Sigmoid colon (tissue), 7 donors: ENCODE measurements at regions of chr19 and their contacts with region 1.

Region 1: DNA sequence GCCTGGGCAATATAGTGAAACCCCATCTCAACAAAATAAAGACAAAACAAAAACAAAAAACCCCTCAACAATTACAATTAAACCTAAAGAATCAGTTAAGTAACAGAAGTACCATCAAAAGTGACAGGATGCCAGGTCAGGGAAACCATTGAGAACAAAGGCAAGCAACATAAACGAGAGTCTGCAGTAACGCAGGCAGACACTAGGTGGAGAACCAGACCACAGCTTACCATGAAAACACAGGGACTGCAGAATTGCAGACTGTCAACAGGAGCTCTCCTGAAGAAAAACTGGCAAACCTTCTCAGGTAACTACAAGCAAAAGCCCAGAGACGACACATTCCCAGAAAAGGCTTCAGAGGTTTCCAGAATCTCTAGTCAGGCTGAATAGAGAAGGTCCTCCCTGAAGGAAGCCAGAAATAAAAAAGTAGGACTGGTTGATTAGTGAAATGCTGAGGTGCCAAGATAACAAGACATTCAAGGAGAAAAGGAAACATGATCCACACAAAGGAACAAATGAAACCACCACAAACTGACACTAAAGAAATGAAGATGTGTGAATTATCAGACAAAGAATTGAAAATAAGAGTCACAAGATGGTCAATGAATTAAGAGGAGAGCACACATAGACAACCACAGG is 2.2 kb upstream of the ZNF665 start:
- DNase-seq: peak; percentile 87
- H3K4me3 ChIP-seq: no peak overlapping the region
- H3K27ac ChIP-seq: peak overlapping the region; percentile 36 to 84 (median 40)
- H3K4me1 ChIP-seq: peaks cover 0 to 22% (median 14%) of the 10 kb centered on the region in 4 donors
- H3K27me3 ChIP-seq: no peaks in the 10 kb centered on the region
- CTCF ChIP-seq: peak; percentile 89 to 92 (median 92)
- EP300 ChIP-seq: no peak
- POLR2A ChIP-seq: no peak

Region 2: GRCh38 chr19:53158119-53158656 is 37.2 kb before region 1 on chr19:
- intact Hi-C with region 1: loop called (anchors 5 kb)
- DNase-seq: peak; percentile 66
- H3K4me3 ChIP-seq: peak overlapping the region; percentile 61 to 71 (median 68)
- H3K27ac ChIP-seq: peak overlapping the region; percentile 68 to 82 (median 76)
- H3K4me1 ChIP-seq: peaks cover 0 to 21% (median 16%) of the 10 kb centered on the region in 4 donors
- H3K27me3 ChIP-seq: no peaks in the 10 kb centered on the region
- CTCF ChIP-seq: no peak
- EP300 ChIP-seq: no peak
- POLR2A ChIP-seq: no peak

Region 3: DNA sequence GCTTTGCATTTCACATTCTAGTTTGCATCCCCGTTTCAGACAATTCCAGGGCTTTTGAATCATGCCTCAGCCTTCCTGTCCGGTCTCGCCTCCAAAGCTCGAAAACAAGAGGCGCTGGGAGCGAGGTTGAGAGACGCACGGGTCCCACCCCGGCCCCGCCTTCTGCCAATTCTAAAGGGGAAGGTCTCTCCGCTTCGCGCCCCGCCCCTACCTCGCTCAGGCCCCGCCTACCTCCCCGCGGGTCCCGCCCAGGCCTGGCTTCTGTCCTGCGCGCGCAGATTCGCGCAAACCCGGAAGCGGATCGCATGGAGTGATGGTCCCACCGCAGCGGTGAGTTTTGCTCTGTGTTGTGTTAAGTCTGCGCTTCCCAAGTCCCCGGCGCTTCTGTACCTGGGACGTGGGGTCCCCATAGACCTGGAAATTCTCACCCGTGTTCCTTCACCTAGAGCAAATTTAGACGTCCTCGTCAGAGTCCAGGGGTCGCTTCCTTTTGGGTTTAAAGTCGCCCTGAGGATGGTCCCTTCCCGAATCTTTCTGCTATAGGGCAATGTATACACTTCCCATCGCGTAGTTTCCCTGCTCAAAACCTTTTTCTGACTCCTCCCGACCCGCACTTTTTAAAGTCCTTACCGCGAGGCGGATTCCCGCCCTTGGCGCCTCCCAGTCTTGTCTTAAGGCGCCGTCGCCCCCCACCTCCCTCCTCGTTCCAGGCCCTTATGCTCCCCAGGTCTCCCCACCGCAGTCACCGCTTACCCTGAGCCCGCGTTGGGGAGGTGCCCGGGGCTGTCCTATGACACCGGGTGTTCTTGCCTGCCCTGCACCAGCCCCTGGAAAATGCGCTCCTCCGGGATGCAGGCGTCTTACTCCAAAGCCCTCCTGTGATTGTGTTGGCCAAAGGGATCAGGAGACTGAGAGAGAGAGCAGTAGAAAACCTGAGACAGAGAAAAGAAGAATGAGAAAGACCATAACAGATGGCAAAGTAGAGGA is 138.4 kb after region 1 on chr19 and contains the start of gene ZNF845:
- intact Hi-C with region 1: loop called (anchors 5 kb)
- DNase-seq: peak; percentile 98
- H3K4me3 ChIP-seq: peak within 1 kb of the TSS; percentile 41 to 75 (median 66)
- H3K27ac ChIP-seq: peak within 1 kb of the TSS; percentile 80 to 88 (median 82)
- H3K4me1 ChIP-seq: peaks cover 0 to 15% (median 12%) of the 10 kb centered on the region in 4 donors
- H3K27me3 ChIP-seq: peaks cover 0 to 5% (median 0%) of the 10 kb centered on the region in 3 donors
- CTCF ChIP-seq: no peak
- EP300 ChIP-seq: no peak
- POLR2A ChIP-seq: peak; percentile 44 to 50
- total RNA-seq, gene ZNF845: 4.6 to 8.9 (median 7.2) TPM

Region 4: GRCh38 chr19:53394974-53395839 is 199.8 kb after region 1 on chr19 and contains the start of gene ZNF765:
- intact Hi-C with region 1: loop called (anchors 10 kb)
- DNase-seq: peak; percentile 98
- H3K4me3 ChIP-seq: peak within 1 kb of the TSS; percentile 73 to 89 (median 78)
- H3K27ac ChIP-seq: peak within 1 kb of the TSS; percentile 79 to 92 (median 86)
- H3K4me1 ChIP-seq: peaks cover 0 to 22% (median 21%) of the 10 kb centered on the region in 4 donors
- H3K27me3 ChIP-seq: no peaks in the 10 kb centered on the region
- CTCF ChIP-seq: peak in 3 of 4 experiments; percentile 47 to 54 (median 52)
- EP300 ChIP-seq: no peak
- POLR2A ChIP-seq: peak; percentile 62 to 67
- total RNA-seq, gene ZNF765: 6.2 to 13.0 (median 11.7) TPM

Region 5: GRCh38 chr19:53520550-53521372 is 325.4 kb after region 1 on chr19:
- intact Hi-C with region 1: loop called (anchors 5 kb)
- DNase-seq: peak; percentile 99
- H3K4me3 ChIP-seq: peak overlapping the region; percentile 38 to 56 (median 52)
- H3K27ac ChIP-seq: peak overlapping the region; percentile 88 to 90 (median 88)
- H3K4me1 ChIP-seq: peaks cover 0 to 14% (median 11%) of the 10 kb centered on the region in 4 donors
- H3K27me3 ChIP-seq: no peaks in the 10 kb centered on the region
- CTCF ChIP-seq: no peak
- EP300 ChIP-seq: peak; percentile 46 to 98 (median 86)
- POLR2A ChIP-seq: no peak